Uterus (tissue), 4 donors: ENCODE measurements at regions of chr6 and their contacts with region 1.

Region 1: DNA sequence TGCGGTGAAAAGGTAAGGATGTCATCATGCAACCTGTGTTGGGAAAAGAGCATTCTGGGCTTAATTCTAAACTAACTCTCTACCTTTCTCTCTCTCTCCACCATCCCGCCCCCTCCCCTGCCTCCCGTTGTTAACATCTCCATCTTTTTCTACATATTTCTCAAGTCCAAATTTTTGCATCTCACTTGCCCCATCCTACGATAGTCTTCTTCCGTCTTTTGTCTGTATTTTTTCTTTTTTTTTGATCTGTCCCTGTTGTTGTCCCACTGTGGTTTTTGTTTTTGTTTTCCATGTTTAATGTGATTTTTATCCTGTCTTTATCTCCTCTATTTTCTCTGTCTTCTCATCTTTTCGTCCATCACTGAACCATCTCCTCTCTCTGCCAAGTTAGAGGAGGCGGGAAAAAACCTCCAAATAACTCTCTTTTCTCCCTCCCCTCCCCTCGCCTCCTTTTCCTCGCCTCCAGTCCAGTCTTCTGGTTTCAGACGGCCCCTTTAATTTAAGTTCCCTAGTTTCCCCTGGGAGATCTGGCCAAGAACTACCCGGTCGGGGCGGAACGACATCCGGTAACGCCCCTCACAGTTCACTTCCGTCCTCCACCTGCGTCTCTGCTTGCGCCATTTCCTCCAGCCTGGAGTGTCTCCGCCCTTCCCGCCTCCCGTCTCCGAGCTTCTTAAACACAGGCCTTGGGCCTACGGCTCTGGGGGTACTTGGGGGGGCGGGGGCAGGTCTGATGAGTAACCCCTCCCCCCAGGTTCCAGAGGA is at the start of gene NFKBIL1:
- DNase-seq: peak; percentile 96 to 97
- H3K4me3 ChIP-seq: peak within 1 kb of the TSS; percentile 34 to 42
- H3K27ac ChIP-seq: peak within 1 kb of the TSS; percentile 84 to 95
- H3K4me1 ChIP-seq: peaks cover 0 to 3% of the 10 kb centered on the region in 2 donors
- H3K27me3 ChIP-seq: no peaks in the 10 kb centered on the region
- CTCF ChIP-seq: peak in 2 of 4 experiments; percentile 24 to 29
- POLR2A ChIP-seq: peak; percentile 65 to 77
- total RNA-seq, gene NFKBIL1: 19.7 to 38.5 (median 20.8) TPM

Region 2: GRCh38 chr6:31597006-31597405 is 49.9 kb after region 1 on chr6:
- intact Hi-C with region 1: loop called (anchors 5 kb)
- DNase-seq: no peak
- H3K4me3 ChIP-seq: no peak overlapping the region
- H3K27ac ChIP-seq: no peak overlapping the region
- H3K4me1 ChIP-seq: no peaks in the 10 kb centered on the region
- H3K27me3 ChIP-seq: no peaks in the 10 kb centered on the region
- CTCF ChIP-seq: peak in 1 of 4 experiments; percentile 25
- POLR2A ChIP-seq: no peak

Region 3: DNA sequence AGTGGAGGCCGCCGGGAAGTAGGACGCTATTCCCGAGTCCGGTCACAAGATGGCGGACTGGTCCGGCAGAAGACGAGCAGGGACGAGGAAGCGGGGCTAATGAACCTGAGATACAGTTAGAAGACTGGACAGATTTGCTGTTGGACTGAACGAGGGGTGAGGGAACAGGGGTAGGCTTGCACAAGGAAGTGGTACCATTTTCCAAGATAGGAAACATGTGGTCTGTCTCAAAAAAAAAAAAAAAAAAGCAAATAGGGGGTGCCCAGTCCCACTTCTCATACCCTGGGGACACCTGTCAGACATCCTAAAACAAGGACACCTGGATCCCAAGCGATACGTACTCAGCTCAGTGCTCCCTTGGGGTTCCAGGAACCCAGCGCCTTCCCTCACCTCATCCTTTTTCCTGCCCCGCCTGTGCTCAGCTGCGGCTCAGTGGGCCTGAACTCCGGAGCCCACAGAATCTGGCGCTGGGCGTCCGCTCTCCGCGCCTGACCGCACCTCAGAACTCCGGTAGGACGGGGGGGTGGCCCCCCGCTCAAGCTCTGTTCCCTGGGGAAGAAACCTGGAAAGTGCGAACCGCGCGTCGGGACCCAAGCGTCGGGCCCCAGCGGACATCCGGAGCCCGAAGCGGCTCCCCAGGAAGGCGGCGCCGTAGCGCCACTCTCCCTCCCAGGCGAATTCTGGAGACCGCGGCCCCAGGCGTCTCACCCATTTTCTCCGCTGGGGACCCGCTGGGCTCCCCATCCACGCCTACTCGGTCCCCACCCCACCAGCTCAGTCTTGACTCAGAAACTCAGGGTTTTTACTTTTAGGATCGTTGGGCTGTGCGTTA is 133.9 kb after region 1 on chr6 and contains the start of gene LY6G5C:
- intact Hi-C with region 1: no loop called
- DNase-seq: peak; percentile 85 to 86
- H3K4me3 ChIP-seq: peak within 1 kb of the TSS; percentile 40 to 56
- H3K27ac ChIP-seq: peak within 1 kb of the TSS; percentile 71 to 88
- H3K4me1 ChIP-seq: peaks cover 0 to 4% of the 10 kb centered on the region in 2 donors
- H3K27me3 ChIP-seq: no peaks in the 10 kb centered on the region
- CTCF ChIP-seq: peak; percentile 70 to 92 (median 82)
- POLR2A ChIP-seq: peak in 1 of 2 donors; percentile 19
- total RNA-seq, gene LY6G5C: 1.0 to 4.4 (median 3.8) TPM in 3 of 4 donors, not detected in the other